Calu3 (cell line): ENCODE measurements at regions of chr11 and their contacts with region 1.

Region 1: GRCh38 chr11:78045851-78046485 is 17.7 kb upstream of the THRSP start:
- DNase-seq: peak; percentile 91
- H3K4me3 Mint-ChIP-seq: peak overlapping the region; percentile 74
- H3K27ac Mint-ChIP-seq: peak overlapping the region; percentile 76
- H3K4me1 Mint-ChIP-seq: peaks cover 34% of the 10 kb centered on the region
- H3K27me3 Mint-ChIP-seq: no peaks in the 10 kb centered on the region
- CTCF ChIP-seq: peak; percentile 95

Region 2: DNA sequence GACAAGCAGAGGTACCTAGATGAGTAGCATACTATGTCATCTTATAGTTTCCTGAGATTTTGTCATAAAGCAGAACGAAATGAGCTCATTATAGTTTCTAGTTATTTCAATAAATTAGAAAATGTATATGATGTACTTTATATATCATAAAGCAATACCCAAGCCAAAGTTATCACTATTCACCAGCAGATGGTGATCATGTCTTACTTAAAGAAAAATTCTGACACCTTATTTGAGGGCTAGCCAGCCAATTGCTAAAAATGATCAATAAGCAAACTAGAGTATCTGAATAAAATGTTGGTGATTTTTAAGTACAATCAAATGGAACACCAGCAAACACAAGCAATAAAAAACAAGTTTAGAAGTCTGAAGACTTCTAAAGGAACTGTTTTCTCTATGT is 269.5 kb before region 1 on chr11:
- CTCF ChIA-PET with region 1: no interaction called
- intact Hi-C with region 1: loop called (anchors 5 kb)
- DNase-seq: no peak
- H3K4me3 Mint-ChIP-seq: no peak overlapping the region
- H3K27ac Mint-ChIP-seq: no peak overlapping the region
- H3K4me1 Mint-ChIP-seq: peaks cover 1% of the 10 kb centered on the region
- H3K27me3 Mint-ChIP-seq: no peaks in the 10 kb centered on the region
- CTCF ChIP-seq: no peak

Region 3: GRCh38 chr11:77994412-77995362 is 51.3 kb before region 1 on chr11 and contains the start of gene INTS4:
- CTCF ChIA-PET with region 1: interaction called, 9 read pairs
- intact Hi-C with region 1: loop called (anchors 10 kb)
- DNase-seq: peak; percentile 98
- H3K4me3 Mint-ChIP-seq: peak within 1 kb of the TSS; percentile 86
- H3K27ac Mint-ChIP-seq: peak within 1 kb of the TSS; percentile 89
- H3K4me1 Mint-ChIP-seq: peaks cover 20% of the 10 kb centered on the region
- H3K27me3 Mint-ChIP-seq: no peaks in the 10 kb centered on the region
- CTCF ChIP-seq: no peak
- total RNA-seq, gene INTS4: 35.4 and 43.9 TPM in 2 replicates

Region 4: DNA sequence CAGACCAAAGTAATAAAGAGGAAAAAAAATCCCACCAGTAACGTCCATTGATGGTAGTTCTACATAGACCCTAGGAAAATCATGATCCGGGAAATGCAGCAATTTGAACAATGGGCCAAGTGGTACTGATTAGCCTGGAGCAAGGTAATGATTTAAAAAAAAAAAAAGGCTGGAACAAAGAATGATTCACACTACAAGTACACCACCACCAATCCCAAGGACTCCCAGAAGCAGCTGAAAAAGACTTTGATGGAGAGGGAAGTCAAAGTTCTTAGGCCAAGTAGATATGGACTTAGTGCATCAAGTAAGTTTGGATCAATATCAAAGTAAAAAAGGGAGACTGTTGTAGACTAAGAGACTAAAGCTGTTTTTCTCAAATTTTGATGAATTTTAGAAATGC is 34.7 kb before region 1 on chr11:
- CTCF ChIA-PET with region 1: interaction called, 5 read pairs
- intact Hi-C with region 1: loop called (anchors 1 kb)
- DNase-seq: no peak
- H3K4me3 Mint-ChIP-seq: no peak overlapping the region
- H3K27ac Mint-ChIP-seq: no peak overlapping the region
- H3K4me1 Mint-ChIP-seq: no peaks in the 10 kb centered on the region
- H3K27me3 Mint-ChIP-seq: no peaks in the 10 kb centered on the region
- CTCF ChIP-seq: no peak

Region 5: GRCh38 chr11:78080818-78081495 is 35.0 kb after region 1 on chr11:
- CTCF ChIA-PET with region 1: no interaction called
- intact Hi-C with region 1: no loop called
- DNase-seq: peak; percentile 22
- H3K4me3 Mint-ChIP-seq: no peak overlapping the region
- H3K27ac Mint-ChIP-seq: peak overlapping the region; percentile 87
- H3K4me1 Mint-ChIP-seq: peaks cover 41% of the 10 kb centered on the region
- H3K27me3 Mint-ChIP-seq: no peaks in the 10 kb centered on the region
- CTCF ChIP-seq: no peak